ENCODE measurements at regions of chr6 and their contacts with region 1.

Region 1: DNA sequence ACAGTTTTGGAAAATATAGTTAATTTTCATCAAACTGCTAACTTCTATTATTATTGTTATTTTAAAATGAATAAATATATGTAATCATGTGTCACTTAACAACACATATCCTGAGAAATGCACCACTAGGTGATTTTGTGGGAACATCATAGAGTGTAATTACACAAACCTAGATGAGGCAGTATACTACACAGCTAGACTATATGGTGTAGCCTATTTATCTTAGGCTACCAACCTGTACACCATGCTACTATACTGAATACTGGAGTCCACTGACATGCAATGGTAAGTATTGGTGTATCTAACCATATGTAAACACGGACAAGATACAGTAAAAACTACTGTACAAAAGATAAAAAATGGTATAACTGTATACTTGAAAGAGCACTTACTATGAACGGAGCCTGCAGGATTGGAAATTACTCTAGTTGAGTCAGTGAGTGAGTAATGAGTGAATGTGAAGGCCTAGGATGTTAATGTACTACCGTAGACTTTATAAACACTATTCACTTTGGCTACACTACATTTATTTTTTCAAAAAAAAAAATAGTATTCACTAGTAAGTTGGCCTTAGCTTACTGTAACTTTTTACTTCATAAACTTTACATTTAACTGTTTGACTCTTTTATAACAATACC is 72.4 kb downstream of the ASCC3 start:
- DNase-seq: no peak
- H3K4me3 ChIP-seq: no peak overlapping the region
- H3K27ac ChIP-seq: no peak overlapping the region
- H3K4me1 ChIP-seq: no peaks in the 10 kb centered on the region
- H3K27me3 ChIP-seq: no peaks in the 10 kb centered on the region
- CTCF ChIP-seq: no peak
- EP300 ChIP-seq: no peak
- POLR2A ChIP-seq: no peak

Region 2: GRCh38 chr6:100796049-100796823 is 12.5 kb before region 1 on chr6:
- in situ Hi-C with region 1: no loop called
- intact Hi-C with region 1: loop called (anchors 2 kb)
- DNase-seq: no peak
- H3K4me3 ChIP-seq: no peak overlapping the region
- H3K27ac ChIP-seq: no peak overlapping the region
- H3K4me1 ChIP-seq: no peaks in the 10 kb centered on the region
- H3K27me3 ChIP-seq: no peaks in the 10 kb centered on the region
- CTCF ChIP-seq: no peak
- EP300 ChIP-seq: no peak
- POLR2A ChIP-seq: no peak

Measured in transverse colon (tissue), 4 donors.